ENCODE measurements at regions of chr6 and their contacts with region 1.

Region 1: DNA sequence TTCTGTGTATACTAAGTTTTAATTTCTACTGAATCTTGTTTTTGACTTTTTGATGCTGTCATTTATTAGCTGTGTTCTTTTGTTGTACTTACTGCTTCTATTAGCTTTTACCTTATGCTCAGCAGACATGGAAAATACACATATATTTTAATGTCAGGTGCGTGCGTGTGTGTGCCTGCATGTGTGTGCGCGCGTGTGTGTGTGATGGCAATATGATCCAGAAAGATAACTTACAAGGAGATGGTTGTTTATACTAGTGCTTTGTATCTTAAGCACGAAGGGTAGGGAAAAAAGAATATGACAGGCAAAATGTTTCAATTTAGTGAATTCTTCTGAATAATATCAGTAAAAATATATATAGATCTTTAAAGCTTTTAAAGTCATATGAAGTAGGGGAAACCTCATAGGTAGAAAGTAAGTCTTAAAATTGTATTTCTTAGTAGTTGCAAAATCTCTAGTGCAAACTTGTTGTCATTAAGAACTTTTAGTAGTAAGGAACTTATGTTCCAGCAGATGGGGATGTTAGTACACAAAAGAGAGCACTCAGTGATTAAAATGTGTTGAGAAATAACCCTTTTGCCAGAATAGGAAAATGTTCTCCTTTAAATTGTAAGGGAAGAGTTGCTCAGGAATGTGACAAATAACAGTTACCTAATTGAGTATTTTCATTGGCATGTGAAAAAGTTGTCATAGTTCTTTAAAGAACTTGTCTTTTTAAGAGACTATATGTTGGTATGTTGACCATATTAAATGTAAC is 13.2 kb downstream of the QKI start:
- H3K4me3 ChIP-seq: no peak overlapping the region
- H3K27ac ChIP-seq: no peak overlapping the region
- H3K4me1 ChIP-seq: peaks cover 13% of the 10 kb centered on the region
- CTCF ChIP-seq: peak; percentile 56

Region 2: GRCh38 chr6:163554663-163555062 is 127.0 kb after region 1 on chr6:
- CTCF ChIA-PET with region 1: interaction called, 12 read pairs
- POLR2A ChIA-PET with region 1: no interaction called
- H3K4me3 ChIP-seq: no peak overlapping the region
- H3K27ac ChIP-seq: no peak overlapping the region
- H3K4me1 ChIP-seq: no peaks in the 10 kb centered on the region
- CTCF ChIP-seq: no peak

Region 3: DNA sequence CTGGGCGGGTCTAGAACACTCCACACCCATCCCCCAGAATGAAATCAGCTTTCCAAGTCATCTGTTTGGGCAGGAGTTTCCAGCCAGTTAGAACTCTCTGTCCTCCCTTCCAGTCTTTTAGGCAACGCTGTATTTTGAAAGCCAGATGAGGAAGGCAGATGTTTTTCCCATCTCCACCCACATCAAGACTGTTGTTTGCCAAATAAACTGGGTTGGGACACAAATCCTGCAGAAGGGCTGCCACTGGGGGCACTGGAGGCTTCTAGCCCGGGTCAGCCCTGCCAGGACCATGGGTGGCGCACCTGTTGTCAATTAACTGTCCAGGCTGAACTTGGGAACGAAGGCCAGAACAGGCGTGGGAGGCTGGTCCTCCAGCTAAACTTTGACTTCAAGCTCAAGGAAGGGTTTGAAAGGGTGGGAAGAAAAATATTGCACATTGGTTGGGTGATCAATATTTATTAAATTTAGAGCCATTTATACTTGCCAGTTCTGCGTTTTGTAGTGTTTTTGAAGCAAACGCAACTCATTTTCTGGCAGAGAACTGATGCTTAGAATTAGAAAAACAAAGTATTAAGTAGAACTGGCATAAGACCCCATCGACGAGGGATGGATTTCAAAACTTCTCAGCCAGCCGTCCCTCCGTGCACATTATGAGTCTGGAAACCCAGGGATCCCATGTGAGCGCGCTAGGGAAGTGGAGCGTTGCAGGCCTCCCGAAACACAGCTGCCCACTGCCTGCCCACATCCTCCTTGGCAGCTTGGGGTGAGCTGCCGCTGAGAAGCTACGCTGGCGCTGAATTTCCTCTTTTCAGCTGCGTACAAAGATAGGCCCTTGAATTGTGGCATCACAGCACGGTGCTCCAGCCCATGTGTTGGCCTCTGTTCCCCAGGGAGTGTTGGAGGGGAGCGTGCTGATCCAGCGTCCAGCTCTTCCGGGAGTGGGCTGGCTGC is 284.2 kb after region 1 on chr6:
- CTCF ChIA-PET with region 1: no interaction called
- POLR2A ChIA-PET with region 1: no interaction called
- H3K4me3 ChIP-seq: no peak overlapping the region
- H3K27ac ChIP-seq: no peak overlapping the region
- H3K4me1 ChIP-seq: no peaks in the 10 kb centered on the region
- CTCF ChIP-seq: no peak

Measured in HEK293 (cell line).